ENCODE measurements at regions of chr2 and their contacts with region 1.

Region 1: DNA sequence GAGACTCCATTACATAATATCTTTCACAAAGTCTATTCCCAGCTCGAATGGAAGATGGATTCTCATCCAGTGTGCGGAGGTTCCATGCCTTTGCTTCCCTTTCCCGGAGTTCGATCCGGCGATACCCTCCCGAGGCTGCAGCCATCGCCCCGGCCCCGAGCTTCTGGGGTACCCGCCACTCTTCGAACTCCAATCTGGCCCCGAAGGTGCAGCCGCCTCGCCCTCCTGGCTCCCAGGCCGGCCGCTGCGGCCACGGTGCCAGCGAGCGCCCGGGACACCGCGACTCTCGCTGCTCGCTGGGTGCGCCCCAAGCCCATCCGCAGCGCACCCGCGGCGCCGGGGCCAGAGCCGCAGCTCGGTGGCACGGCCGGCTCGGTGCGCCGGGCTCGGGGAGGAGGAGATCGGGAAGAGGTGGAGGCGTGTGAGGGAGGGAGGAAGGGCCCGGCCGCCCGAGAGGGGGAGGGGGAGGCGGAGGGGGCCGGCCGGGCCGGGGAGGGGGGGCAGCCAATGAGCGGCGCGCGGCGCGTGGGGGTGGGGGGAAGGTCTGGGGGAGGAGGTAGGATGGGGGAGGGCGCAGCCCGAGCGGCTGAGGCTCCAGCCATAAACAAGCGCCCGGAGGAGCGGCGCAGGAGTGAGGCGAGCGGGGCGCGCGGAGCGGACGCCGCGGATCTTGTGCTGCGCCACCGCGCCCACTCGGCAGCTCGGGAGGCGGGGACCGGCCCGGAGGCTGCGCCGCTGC is at the start of gene CRIM1:
- DNase-seq: peak; percentile 39
- H3K4me3 Mint-ChIP-seq: peak within 1 kb of the TSS; percentile 82
- H3K27ac Mint-ChIP-seq: peak within 1 kb of the TSS; percentile 24
- H3K4me1 Mint-ChIP-seq: peaks cover 25% of the 10 kb centered on the region
- H3K27me3 Mint-ChIP-seq: peaks cover 64% of the 10 kb centered on the region
- total RNA-seq, gene CRIM1: 12.4 and 12.8 TPM in 2 replicates

Region 2: DNA sequence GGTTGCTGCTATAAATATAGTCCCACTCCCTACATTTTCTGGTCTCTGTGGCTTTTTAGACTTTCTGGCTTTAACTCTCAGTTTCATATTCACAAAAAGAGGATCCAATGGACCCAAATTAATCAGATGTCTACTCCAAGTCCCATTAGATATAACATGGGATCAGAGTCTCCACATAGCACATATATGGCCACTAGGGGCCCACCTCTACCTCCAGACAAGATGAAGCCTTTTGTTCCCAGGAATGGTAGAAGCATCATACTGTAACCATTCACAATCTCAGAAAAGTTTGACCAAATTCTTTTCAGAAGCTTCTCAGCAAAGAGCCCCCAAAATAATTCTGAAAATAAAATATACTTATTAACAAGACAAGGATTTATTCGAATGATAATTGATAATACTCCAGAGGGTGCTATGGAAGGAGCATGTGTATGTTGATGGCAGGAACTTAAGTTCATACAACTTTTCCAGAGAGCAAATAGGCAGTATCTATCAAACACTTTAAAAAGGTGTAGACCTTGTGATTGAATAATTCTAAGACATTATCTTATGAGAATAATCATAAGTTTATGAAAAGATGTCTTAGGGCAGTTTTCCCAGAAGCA is 382.1 kb before region 1 on chr2:
- intact Hi-C with region 1: loop called (anchors 2 kb)
- DNase-seq: no peak
- H3K4me3 Mint-ChIP-seq: no peak overlapping the region
- H3K27ac Mint-ChIP-seq: no peak overlapping the region
- H3K4me1 Mint-ChIP-seq: peaks cover 3% of the 10 kb centered on the region
- H3K27me3 Mint-ChIP-seq: peaks cover 12% of the 10 kb centered on the region

Region 3: DNA sequence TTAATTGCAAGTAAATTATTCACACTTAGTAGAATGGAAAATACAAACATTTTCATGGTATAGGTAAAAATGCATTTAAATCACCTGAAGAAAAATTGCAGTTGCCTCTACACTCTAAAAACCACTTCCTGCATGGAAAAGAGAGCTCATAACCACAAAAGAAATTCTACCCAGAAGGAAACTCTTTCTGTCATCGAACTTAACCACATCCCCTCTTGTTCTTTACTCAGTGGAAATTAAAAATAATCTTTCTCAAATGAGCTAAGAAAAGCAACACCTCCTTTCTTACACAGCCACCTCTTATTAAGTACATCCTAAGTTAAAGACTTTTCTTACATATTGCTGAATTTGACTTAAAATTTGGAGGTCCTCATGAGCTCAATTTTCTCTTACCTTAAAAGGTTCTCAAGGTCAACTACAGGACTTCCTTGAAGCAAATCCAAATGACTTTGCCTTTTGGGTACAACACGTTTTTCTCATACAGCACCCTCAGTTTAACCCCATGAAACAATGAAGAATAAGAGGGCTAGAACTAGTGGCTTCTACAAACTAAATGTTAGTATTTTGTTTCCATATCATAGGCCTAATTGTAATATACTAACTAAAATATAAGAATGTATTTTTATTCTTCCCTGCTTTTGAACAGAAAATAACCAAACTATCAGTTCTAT is 108.9 kb before region 1 on chr2:
- intact Hi-C with region 1: loop called (anchors 2 kb)
- DNase-seq: no peak
- H3K4me3 Mint-ChIP-seq: peak overlapping the region; percentile 44
- H3K27ac Mint-ChIP-seq: peak overlapping the region; percentile 81
- H3K4me1 Mint-ChIP-seq: peaks cover 52% of the 10 kb centered on the region
- H3K27me3 Mint-ChIP-seq: peaks cover 2% of the 10 kb centered on the region

Region 4: DNA sequence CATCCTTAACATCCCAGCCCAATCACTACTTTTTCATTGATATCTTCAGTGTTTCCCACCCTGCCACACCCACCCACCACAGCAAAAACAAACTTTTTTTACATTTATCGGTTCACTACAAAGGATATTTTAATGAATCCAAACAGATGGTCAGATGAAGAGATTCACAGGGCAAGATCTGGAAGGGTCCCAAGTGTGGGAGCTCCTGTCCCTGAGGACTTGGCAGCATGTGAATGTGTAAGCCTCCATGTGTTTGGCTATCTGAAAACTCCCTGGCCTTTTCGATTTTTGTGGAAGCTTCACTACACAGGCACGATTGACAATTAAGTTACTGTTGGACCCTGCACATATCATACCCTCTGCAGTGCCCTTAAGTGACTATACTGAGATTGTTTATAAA is 47.9 kb before region 1 on chr2:
- intact Hi-C with region 1: loop called (anchors 2 kb)
- DNase-seq: no peak
- H3K4me3 Mint-ChIP-seq: no peak overlapping the region
- H3K27ac Mint-ChIP-seq: no peak overlapping the region
- H3K4me1 Mint-ChIP-seq: peaks cover 21% of the 10 kb centered on the region
- H3K27me3 Mint-ChIP-seq: peaks cover 5% of the 10 kb centered on the region

Region 5: GRCh38 chr2:36461039-36461681 is 105.8 kb after region 1 on chr2:
- intact Hi-C with region 1: loop called (anchors 2 kb)
- DNase-seq: no peak
- H3K4me3 Mint-ChIP-seq: no peak overlapping the region
- H3K27ac Mint-ChIP-seq: no peak overlapping the region
- H3K4me1 Mint-ChIP-seq: peaks cover 1% of the 10 kb centered on the region
- H3K27me3 Mint-ChIP-seq: peaks cover 1% of the 10 kb centered on the region

Region 6: DNA sequence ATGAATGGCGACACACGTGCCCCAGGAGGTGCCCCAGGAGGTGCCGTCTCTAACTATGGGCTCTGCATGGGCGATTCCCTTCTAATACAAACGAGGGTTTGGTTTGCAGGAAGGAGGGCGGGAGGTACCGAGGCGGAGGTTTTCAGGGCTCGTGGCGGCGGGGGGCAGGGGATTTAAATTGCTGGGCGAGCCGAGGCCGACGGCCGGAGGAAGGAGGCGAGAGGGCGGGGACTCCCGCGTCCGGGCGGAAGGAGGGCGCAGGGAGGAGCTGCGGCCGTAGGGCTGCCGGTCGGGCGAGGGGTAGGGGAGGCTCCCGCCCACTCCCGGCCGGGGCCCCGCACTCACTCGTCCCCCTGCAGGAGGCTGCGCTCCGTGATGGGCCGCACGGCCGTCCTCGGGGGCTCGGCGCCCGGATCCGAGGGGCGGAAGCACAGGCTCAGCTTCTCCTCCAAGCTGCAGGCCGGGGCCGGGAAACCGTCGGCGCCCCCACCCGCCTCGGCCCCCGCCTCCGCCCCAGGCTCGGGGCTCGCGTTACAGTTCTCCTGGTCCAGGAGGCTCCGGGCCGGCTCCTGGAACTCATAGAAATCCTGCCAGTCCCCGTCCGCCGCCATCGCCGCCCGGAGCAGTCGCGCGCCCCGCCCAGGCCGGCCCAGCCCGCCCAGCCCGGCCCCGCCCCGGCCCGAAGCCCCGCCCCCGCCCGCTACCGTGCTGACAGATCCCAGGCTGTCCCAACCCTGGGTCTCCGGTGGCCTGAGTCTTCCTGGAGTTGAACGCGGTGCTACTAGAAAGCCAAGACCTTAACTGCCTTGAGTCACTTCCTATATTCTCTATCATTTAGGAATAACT is 242.4 kb after region 1 on chr2 and contains the start of gene FEZ2:
- intact Hi-C with region 1: loop called (anchors 2 kb)
- DNase-seq: peak; percentile 72
- H3K4me3 Mint-ChIP-seq: peak within 1 kb of the TSS; percentile 91
- H3K27ac Mint-ChIP-seq: peak within 1 kb of the TSS; percentile 86
- H3K4me1 Mint-ChIP-seq: peaks cover 22% of the 10 kb centered on the region
- H3K27me3 Mint-ChIP-seq: no peaks in the 10 kb centered on the region
- total RNA-seq, gene FEZ2: 16.3 and 17.6 TPM in 2 replicates

Region 7: GRCh38 chr2:36785179-36785795 is 430.0 kb after region 1 on chr2:
- intact Hi-C with region 1: loop called (anchors 5 kb)
- DNase-seq: peak; percentile 63
- H3K4me3 Mint-ChIP-seq: no peak overlapping the region
- H3K27ac Mint-ChIP-seq: no peak overlapping the region
- H3K4me1 Mint-ChIP-seq: peaks cover 3% of the 10 kb centered on the region
- H3K27me3 Mint-ChIP-seq: peaks cover 26% of the 10 kb centered on the region

Measured in activated T-helper 2 cell treated with anti-CD3 and anti-CD28 coated beads, Interferon-gamma antibody, Interleukin-2, Interleukin-4, amounts not matched to agents 10 μg/mL and 5 μg/mL and 100 μg/mL, durations not matched to agents 14 hours and 24 hours and 36 hours (primary cell).